CD8-positive, alpha-beta T cell (primary cell): ENCODE measurements at regions of chr12 and their contacts with region 1.

Region 1: GRCh38 chr12:93256256-93256969 is 121.3 kb upstream of the NUDT4 start:
- DNase-seq: no peak
- ATAC-seq: no peak
- H3K4me3 ChIP-seq: no peak overlapping the region
- H3K4me3 Mint-ChIP-seq: no peak overlapping the region
- H3K27ac ChIP-seq: no peak overlapping the region
- H3K27ac Mint-ChIP-seq: no peak overlapping the region
- H3K4me1 ChIP-seq: no peaks in the 10 kb centered on the region
- H3K4me1 Mint-ChIP-seq: no peaks in the 10 kb centered on the region
- H3K27me3 ChIP-seq: no peaks in the 10 kb centered on the region
- H3K27me3 Mint-ChIP-seq: no peaks in the 10 kb centered on the region
- CTCF ChIP-seq: no peak

Region 2: DNA sequence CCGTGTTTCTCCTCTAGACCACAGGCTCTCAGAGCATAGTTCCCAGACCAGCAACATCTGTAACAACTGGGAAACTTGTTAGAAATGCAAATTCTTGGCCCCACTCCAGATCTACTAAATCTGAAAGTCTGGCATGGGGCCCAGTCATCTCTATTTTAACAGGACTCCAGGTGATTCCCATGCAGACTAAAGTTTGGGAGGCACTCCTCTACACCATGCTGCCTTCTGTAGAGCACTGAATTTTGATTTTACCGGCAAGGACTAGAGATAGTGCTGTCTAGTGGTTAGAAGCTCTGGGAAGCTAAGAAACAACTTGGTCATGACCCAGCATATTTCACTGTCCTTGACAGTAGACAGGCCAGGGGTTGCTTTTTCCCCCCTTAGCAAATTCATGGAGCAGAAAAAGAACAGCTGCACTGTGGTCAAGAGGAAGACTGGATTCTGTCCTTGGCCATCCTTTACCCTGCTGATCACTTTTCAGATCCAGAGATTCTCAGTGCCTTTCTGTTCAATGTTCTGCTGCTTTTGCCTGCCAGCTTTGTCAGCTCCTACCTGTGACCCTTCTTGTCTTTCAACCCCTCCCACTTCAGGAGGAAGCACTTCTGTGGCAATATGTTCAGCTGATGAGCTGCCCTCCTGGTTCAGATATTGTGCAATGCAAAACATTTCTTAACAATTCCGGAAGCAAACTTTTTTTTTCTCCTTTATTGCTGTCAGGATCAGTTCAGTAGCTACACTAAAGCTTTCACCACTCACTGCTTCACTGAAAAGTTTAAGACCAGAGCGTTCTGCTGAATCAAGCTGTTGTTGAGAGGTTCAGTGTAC is 12.5 kb before region 1 on chr12:
- CTCF ChIA-PET with region 1: no interaction called
- POLR2A ChIA-PET with region 1: no interaction called
- intact Hi-C with region 1: loop called in 1 of 2 experiments (anchors 2 kb)
- DNase-seq: peak in 2 of 9 experiments; percentile 21 to 49
- ATAC-seq: no peak
- H3K4me3 ChIP-seq: no peak overlapping the region
- H3K4me3 Mint-ChIP-seq: peak overlapping the region; percentile 51
- H3K27ac ChIP-seq: peak overlapping the region in 1 of 2 experiments; percentile 5
- H3K27ac Mint-ChIP-seq: peak overlapping the region; percentile 89
- H3K4me1 ChIP-seq: peaks cover 31% of the 10 kb centered on the region
- H3K4me1 Mint-ChIP-seq: peaks cover 47% of the 10 kb centered on the region
- H3K27me3 ChIP-seq: no peaks in the 10 kb centered on the region
- H3K27me3 Mint-ChIP-seq: no peaks in the 10 kb centered on the region
- CTCF ChIP-seq: no peak